Calu3 (cell line): ENCODE measurements at regions of chr6 and their contacts with region 1.

Region 1: DNA sequence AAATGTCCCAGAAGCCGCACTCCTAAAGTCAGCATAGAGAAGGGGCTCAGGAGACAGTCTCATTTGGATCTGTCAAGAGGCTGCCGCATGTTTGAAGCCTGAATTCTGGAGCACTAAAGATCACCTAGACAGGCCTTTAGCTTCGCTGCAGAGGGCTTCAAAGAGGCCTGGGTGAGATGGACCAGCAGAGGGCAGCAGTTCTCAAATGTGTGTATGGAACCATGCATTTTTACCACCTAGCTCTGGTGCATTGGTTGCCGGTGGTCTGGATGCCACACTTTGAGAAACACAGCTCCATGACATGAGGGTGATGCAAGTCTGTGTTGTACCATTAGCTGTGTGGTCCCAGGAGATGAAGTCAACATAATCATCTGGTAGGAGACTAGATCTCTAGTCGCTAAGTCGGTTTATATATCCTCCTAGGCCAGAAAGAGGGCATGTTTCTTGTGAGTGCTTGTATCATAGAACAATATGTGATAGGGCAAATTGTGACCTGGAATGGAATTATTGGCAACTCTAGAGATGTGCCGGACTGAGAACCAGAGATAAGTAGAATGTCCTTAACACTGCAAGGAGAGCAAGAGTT is 64.8 kb downstream of the KIAA0319 start:
- DNase-seq: peak; percentile 93
- H3K4me3 Mint-ChIP-seq: no peak overlapping the region
- H3K27ac Mint-ChIP-seq: no peak overlapping the region
- H3K4me1 Mint-ChIP-seq: peaks cover 40% of the 10 kb centered on the region
- H3K27me3 Mint-ChIP-seq: no peaks in the 10 kb centered on the region
- CTCF ChIP-seq: peak; percentile 94

Region 2: DNA sequence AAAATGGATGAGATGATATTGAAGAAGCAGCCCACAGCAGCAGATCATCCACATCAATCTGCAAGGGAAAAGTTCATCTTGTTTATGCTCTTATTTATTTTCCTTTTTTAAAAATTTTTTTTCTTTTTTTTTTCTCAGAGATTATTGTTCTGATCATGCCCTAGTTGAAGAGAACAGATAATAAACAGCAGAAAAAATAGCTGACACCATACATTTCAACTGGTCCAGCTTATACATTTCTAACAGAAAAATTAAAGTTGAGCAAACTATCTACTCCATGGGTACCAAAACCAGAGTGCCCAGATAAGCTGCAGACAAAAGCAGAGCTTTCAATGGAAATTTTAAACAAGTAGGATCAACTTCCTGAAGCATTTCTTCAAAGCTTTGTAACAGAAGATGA is 55.5 kb after region 1 on chr6:
- CTCF ChIA-PET with region 1: no interaction called
- intact Hi-C with region 1: no loop called
- DNase-seq: no peak
- H3K4me3 Mint-ChIP-seq: no peak overlapping the region
- H3K27ac Mint-ChIP-seq: no peak overlapping the region
- H3K4me1 Mint-ChIP-seq: no peaks in the 10 kb centered on the region
- H3K27me3 Mint-ChIP-seq: no peaks in the 10 kb centered on the region
- CTCF ChIP-seq: no peak

Region 3: GRCh38 chr6:24646782-24647181 is 65.6 kb after region 1 on chr6:
- CTCF ChIA-PET with region 1: interaction called, 27 read pairs
- intact Hi-C with region 1: loop called (anchors 2 kb)
- DNase-seq: peak; percentile 60
- H3K4me3 Mint-ChIP-seq: peak overlapping the region; percentile 96
- H3K27ac Mint-ChIP-seq: peak overlapping the region; percentile 80
- H3K4me1 Mint-ChIP-seq: peaks cover 38% of the 10 kb centered on the region
- H3K27me3 Mint-ChIP-seq: no peaks in the 10 kb centered on the region
- CTCF ChIP-seq: no peak

Region 4: GRCh38 chr6:24666641-24667377 is 85.6 kb after region 1 on chr6 and contains the starts of genes ACOT13 and TDP2:
- CTCF ChIA-PET with region 1: interaction called, 39 read pairs
- intact Hi-C with region 1: loop called (anchors 1 kb)
- DNase-seq: peak; percentile 99
- H3K4me3 Mint-ChIP-seq: peak within 1 kb of the TSS; percentile 87
- H3K27ac Mint-ChIP-seq: peak within 1 kb of the TSS; percentile 90
- H3K4me1 Mint-ChIP-seq: peaks cover 40% of the 10 kb centered on the region
- H3K27me3 Mint-ChIP-seq: no peaks in the 10 kb centered on the region
- CTCF ChIP-seq: peak; percentile 74
- total RNA-seq, gene ACOT13: 74.5 and 78.9 TPM in 2 replicates
- total RNA-seq, gene TDP2: 71.7 and 72.9 TPM in 2 replicates

Region 5: DNA sequence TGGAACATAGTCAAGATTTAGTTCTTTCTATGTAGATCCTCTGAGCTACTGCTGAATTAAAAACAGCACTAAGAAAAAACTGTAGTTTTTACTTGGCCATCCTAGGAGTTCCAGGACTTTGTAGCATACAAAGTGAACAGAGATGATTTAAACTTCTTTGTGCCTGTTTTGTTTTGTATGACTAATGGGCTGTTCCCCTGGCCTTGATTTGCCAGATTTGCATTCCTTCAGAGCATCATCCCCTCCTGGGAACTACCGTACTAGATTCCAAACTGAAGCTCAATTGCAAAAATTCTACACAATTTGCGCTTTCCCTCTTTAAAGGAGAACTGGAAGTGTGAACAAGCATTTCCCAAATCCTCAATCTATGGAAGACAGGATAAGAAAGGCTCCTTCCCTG is 108.8 kb after region 1 on chr6:
- CTCF ChIA-PET with region 1: interaction called, 17 read pairs
- intact Hi-C with region 1: loop called (anchors 1 kb)
- DNase-seq: no peak
- H3K4me3 Mint-ChIP-seq: no peak overlapping the region
- H3K27ac Mint-ChIP-seq: no peak overlapping the region
- H3K4me1 Mint-ChIP-seq: peaks cover 17% of the 10 kb centered on the region
- H3K27me3 Mint-ChIP-seq: no peaks in the 10 kb centered on the region
- CTCF ChIP-seq: no peak

Region 6: GRCh38 chr6:24766680-24767462 is 185.7 kb after region 1 on chr6:
- CTCF ChIA-PET with region 1: interaction called, 23 read pairs
- intact Hi-C with region 1: loop called (anchors 1 kb)
- DNase-seq: no peak
- H3K4me3 Mint-ChIP-seq: no peak overlapping the region
- H3K27ac Mint-ChIP-seq: peak overlapping the region; percentile 17
- H3K4me1 Mint-ChIP-seq: peaks cover 25% of the 10 kb centered on the region
- H3K27me3 Mint-ChIP-seq: no peaks in the 10 kb centered on the region
- CTCF ChIP-seq: peak; percentile 67

Region 7: GRCh38 chr6:25070547-25071366 is 489.6 kb after region 1 on chr6:
- CTCF ChIA-PET with region 1: interaction called, 6 read pairs
- intact Hi-C with region 1: loop called (anchors 5 kb)
- DNase-seq: peak; percentile 94
- H3K4me3 Mint-ChIP-seq: no peak overlapping the region
- H3K27ac Mint-ChIP-seq: no peak overlapping the region
- H3K4me1 Mint-ChIP-seq: no peaks in the 10 kb centered on the region
- H3K27me3 Mint-ChIP-seq: peaks cover 27% of the 10 kb centered on the region
- CTCF ChIP-seq: peak; percentile 100